ENCODE measurements at regions of chr6 and their contacts with region 1.

Region 1: DNA sequence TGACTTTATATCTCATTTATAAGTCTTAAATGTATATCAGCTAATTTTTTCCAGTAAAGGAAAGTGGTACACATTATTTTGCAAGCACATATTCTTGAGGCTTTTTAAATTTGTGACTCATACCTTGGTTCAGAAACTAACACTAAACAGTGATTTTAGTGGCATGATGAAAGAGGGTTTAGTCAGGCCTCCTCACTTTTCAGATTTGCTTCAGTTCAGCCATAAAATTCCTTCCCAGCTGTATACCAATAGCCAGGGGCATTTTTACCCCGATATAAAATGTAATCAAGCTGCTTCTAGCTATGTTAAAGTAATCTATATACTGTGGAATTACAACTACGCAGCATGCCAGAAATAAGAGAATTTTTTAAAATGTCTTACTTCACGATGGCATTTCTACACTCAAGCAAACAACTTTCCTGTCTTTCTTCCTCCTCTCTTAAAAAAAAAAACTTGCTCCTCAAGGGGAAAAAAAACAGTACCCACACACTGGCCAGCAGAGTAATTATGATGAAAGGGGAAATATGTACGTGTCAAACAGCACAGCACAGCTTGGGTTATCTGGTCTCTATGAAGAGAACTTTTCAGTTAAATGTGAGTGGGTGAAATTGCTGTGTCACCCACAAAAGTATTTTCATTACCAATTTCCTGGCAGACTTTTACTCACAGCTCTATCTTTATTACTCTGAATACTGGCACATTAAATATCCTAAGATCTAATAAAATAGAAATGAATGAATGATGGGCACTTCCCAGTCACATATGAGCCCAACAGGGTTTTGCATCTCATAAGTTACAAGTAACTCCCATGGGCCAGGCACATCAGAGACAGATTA is 244.8 kb upstream of the TENT5A start:
- DNase-seq: peak; percentile 81
- H3K4me3 Mint-ChIP-seq: peak overlapping the region; percentile 43
- H3K27ac Mint-ChIP-seq: peak overlapping the region; percentile 96
- H3K4me1 Mint-ChIP-seq: peaks cover 49% of the 10 kb centered on the region
- H3K27me3 Mint-ChIP-seq: no peaks in the 10 kb centered on the region
- CTCF ChIP-seq: no peak

Region 2: DNA sequence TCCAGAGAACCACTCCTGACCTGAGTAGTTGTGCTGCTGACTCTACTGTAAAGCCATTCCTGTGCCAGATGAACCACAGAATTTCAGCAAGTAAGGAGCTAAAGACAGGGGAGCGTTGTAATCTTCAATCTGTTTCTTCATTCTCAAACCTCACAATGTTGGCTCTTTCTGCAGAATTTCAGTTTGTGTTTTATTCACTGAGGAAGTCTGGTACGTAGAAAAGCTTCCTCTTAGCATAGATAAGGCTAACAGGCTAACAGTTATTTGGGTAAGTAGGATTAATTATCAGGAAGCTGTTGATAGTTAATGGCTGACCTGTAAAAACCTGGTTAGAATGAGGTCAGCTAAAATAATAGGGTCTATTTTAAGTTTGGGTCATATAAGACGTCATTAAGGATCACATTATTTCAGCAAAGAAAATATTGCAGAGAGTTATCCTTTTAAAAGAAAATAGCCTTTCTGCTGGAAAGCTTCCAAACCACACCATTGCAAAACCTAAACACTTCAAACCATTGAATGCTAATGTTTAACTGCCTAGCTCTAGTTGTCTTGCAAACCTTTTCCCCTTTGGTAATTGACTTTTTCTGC is 230.7 kb before region 1 on chr6:
- CTCF ChIA-PET with region 1: no interaction called
- POLR2A ChIA-PET with region 1: interaction called, 4 read pairs
- intact Hi-C with region 1: loop called (anchors 5 kb)
- DNase-seq: peak; percentile 94
- H3K4me3 Mint-ChIP-seq: peak overlapping the region; percentile 0
- H3K27ac Mint-ChIP-seq: peak overlapping the region; percentile 8
- H3K4me1 Mint-ChIP-seq: peaks cover 26% of the 10 kb centered on the region
- H3K27me3 Mint-ChIP-seq: no peaks in the 10 kb centered on the region
- CTCF ChIP-seq: no peak

Region 3: DNA sequence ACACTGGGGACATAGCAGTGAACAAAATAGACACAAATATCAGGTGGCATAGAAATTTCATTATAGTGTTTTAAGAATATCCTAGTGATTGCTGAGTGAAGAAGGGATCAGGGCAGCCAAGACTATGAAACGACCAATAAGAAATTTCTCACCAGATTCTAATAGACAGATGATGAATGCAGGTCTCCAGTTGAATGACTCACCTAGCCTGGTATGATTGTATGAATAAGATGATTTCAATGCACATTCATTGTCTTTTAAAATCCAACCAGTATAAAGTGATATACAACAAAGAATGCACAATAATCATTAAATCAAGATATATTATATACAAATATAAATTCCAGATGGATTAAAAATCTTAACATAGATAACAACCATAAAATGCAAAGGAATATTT is 120.3 kb before region 1 on chr6:
- CTCF ChIA-PET with region 1: no interaction called
- POLR2A ChIA-PET with region 1: no interaction called
- intact Hi-C with region 1: no loop called
- DNase-seq: no peak
- H3K4me3 Mint-ChIP-seq: no peak overlapping the region
- H3K27ac Mint-ChIP-seq: no peak overlapping the region
- H3K4me1 Mint-ChIP-seq: peaks cover 5% of the 10 kb centered on the region
- H3K27me3 Mint-ChIP-seq: no peaks in the 10 kb centered on the region
- CTCF ChIP-seq: no peak

Region 4: DNA sequence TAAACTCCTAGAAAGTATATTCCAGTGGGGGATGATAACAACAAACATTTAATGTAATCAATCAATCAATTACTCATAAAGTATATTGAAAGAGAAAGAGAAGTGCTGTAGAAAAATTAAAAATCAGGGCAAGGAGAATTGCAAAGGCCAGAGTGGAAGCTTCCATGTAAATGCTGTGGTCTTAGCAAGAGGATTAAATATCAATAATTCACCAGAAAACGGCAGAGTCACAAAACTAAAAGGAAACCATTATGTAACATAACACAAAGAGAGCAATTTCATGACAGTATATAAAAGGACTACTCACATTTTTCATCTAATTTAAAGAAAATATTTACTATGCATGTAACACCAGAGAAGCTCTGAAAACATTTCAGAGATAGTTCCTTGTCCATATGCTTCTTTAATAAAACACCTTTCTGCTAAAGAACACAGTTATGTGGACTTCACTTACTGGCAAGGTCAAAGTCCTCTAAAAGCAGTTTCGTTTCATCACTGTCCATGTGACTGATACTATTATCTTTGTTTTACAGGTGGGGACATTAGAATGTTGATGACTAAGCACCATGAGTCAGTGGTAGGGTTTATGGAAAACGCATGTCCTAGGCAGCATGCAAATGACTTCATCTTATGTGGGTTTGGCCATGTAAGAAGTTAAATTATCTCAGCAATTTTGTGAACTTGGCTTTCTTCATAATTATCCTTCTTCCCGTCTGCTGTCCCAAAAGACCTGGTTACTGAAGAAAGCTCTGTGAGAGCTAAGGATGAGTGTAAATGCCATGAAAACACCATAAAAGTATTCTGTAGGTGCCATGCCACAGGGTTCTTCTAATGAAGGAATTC is 59.1 kb before region 1 on chr6:
- CTCF ChIA-PET with region 1: no interaction called
- POLR2A ChIA-PET with region 1: interaction called, 3 read pairs
- intact Hi-C with region 1: loop called (anchors 5 kb)
- DNase-seq: peak; percentile 89
- H3K4me3 Mint-ChIP-seq: no peak overlapping the region
- H3K27ac Mint-ChIP-seq: peak overlapping the region; percentile 80
- H3K4me1 Mint-ChIP-seq: peaks cover 28% of the 10 kb centered on the region
- H3K27me3 Mint-ChIP-seq: no peaks in the 10 kb centered on the region
- CTCF ChIP-seq: no peak

Measured in MCF 10A (cell line).